Vagina (tissue), 2 donors: ENCODE measurements at regions of chr9 and their contacts with region 1.

Region 1: GRCh38 chr9:88593537-88594185 is 58.7 kb downstream of the NXNL2 start:
- DNase-seq: no peak
- H3K4me3 ChIP-seq: no peak overlapping the region
- H3K27ac ChIP-seq: no peak overlapping the region
- H3K4me1 ChIP-seq: no peaks in the 10 kb centered on the region
- H3K27me3 ChIP-seq: no peaks in the 10 kb centered on the region
- CTCF ChIP-seq: peak; percentile 16 to 76 (median 73)
- POLR2A ChIP-seq: no peak

Region 2: GRCh38 chr9:89000973-89001916 is 407.6 kb after region 1 on chr9:
- intact Hi-C with region 1: loop called (anchors 1 kb)
- DNase-seq: peak; percentile 91 to 94
- H3K4me3 ChIP-seq: no peak overlapping the region
- H3K27ac ChIP-seq: peak overlapping the region; percentile 79
- H3K4me1 ChIP-seq: peaks cover 59% of the 10 kb centered on the region
- H3K27me3 ChIP-seq: no peaks in the 10 kb centered on the region
- CTCF ChIP-seq: peak; percentile 43 to 88 (median 83)
- POLR2A ChIP-seq: no peak

Region 3: DNA sequence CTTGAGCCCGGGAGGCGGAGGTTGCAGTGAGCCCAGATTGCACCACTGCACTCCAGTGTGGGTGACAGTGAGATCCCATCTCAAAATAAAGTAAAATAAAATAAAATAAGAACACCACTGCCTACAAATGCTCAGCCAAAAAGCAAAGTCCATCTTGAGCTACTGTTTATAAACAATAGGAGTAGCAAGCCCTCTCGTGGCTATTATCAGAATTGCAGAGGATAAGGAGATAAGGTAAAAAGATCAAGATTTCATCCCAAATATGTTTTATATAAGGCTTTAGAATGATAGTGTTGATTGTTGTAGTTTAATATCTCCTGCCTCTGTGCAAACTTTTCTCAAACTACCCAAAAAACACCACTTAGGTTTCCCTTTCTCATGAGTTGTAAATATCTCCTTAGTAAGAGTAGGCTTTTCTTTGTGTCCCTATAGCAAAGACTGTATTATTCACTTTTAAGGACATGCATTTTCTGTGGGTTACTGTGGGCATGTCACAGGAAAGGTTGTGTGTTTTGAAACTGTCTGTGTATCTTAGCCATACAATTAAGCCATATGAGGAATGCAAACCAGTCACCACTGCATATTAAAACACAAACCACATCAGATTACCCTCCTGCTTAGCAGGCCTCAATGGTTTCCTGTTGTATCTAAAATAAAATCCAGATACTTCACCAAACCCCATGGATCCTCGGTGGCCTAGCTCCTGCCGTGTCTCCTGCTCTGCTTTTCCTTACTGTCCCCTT is 685.5 kb after region 1 on chr9:
- intact Hi-C with region 1: loop called (anchors 10 kb)
- DNase-seq: no peak
- H3K4me3 ChIP-seq: no peak overlapping the region
- H3K27ac ChIP-seq: no peak overlapping the region
- H3K4me1 ChIP-seq: peaks cover 11% of the 10 kb centered on the region
- H3K27me3 ChIP-seq: no peaks in the 10 kb centered on the region
- CTCF ChIP-seq: peak; percentile 40 to 73 (median 53)
- POLR2A ChIP-seq: no peak